B cell (primary cell): ENCODE measurements at regions of chr20 and their contacts with region 1.

Region 1: GRCh38 chr20:33731693-33732165 is at the start of gene ZNF341:
- DNase-seq: no peak
- ATAC-seq: peak; percentile 74
- H3K4me3 ChIP-seq: peak within 1 kb of the TSS; percentile 63 to 84 (median 68)
- H3K4me3 Mint-ChIP-seq: peak within 1 kb of the TSS; percentile 98
- H3K27ac ChIP-seq: peak within 1 kb of the TSS; percentile 61 to 81
- H3K27ac Mint-ChIP-seq: peak within 1 kb of the TSS; percentile 96
- H3K4me1 ChIP-seq: peaks cover 20 to 29% of the 10 kb centered on the region in 2 donors
- H3K4me1 Mint-ChIP-seq: peaks cover 24% of the 10 kb centered on the region
- H3K27me3 ChIP-seq: no peaks in the 10 kb centered on the region
- H3K27me3 Mint-ChIP-seq: no peaks in the 10 kb centered on the region
- CTCF ChIP-seq: peak; percentile 84
- total RNA-seq, gene ZNF341: 9.1 and 9.9 TPM in 2 replicates

Region 2: GRCh38 chr20:33489495-33490022 is 242.2 kb before region 1 on chr20:
- CTCF ChIA-PET with region 1: no interaction called
- POLR2A ChIA-PET with region 1: interaction called, 5 read pairs
- intact Hi-C with region 1: loop called (anchors 2 kb)
- DNase-seq: peak; percentile 99
- ATAC-seq: peak; percentile 97
- H3K4me3 ChIP-seq: peak overlapping the region; percentile 24 to 73 (median 68)
- H3K4me3 Mint-ChIP-seq: peak overlapping the region; percentile 93
- H3K27ac ChIP-seq: peak overlapping the region; percentile 97 to 99
- H3K27ac Mint-ChIP-seq: peak overlapping the region; percentile 95
- H3K4me1 ChIP-seq: peaks cover 9 to 19% of the 10 kb centered on the region in 2 donors
- H3K4me1 Mint-ChIP-seq: peaks cover 16% of the 10 kb centered on the region
- H3K27me3 ChIP-seq: no peaks in the 10 kb centered on the region
- H3K27me3 Mint-ChIP-seq: no peaks in the 10 kb centered on the region
- CTCF ChIP-seq: no peak

Region 3: DNA sequence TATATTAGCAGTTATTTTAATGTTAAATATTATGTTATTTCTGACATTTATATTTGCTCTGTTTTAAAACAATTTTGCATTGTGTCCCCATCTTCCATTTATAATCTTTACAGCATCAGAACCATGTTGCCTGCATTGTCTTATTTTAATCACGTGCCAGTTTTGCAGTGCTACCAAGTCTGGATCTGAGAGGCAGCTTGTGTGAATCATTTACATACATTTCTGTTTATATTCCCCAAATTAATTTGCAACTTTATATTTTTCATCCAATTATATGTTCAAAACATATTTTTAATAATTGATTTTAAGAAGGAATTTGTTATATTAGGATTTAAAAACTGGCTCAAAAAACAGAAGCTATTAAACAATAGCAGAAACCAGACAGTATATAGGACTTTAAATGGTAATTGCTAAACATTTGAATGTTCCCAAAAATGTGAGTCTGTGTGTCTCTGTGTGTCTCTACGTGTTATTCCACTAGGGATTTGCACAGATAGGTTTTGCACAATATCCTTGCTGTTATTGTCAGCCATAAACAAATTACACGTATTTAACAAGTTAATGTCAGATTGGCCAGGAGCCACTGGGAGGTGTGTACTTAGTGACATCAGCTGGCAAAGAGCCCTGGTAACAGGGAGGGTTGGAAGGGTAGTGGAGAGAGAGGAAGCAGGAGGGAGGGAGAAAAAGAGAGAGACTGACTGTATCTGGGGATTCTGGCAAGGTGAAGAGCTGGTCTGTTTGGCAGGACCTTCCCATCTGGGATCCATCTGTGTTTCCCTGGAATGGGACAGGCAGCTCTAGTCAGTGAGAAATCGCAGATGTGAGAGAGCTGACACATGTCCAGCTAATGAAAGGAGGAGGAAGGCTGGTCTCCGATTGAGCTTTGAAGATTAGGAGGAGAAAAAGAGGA is 169.8 kb before region 1 on chr20:
- CTCF ChIA-PET with region 1: no interaction called
- POLR2A ChIA-PET with region 1: no interaction called
- intact Hi-C with region 1: no loop called
- DNase-seq: no peak
- ATAC-seq: no peak
- H3K4me3 ChIP-seq: no peak overlapping the region
- H3K4me3 Mint-ChIP-seq: no peak overlapping the region
- H3K27ac ChIP-seq: no peak overlapping the region
- H3K27ac Mint-ChIP-seq: no peak overlapping the region
- H3K4me1 ChIP-seq: no peaks in the 10 kb centered on the region
- H3K4me1 Mint-ChIP-seq: peaks cover 6% of the 10 kb centered on the region
- H3K27me3 ChIP-seq: no peaks in the 10 kb centered on the region
- H3K27me3 Mint-ChIP-seq: no peaks in the 10 kb centered on the region
- CTCF ChIP-seq: no peak

Region 4: GRCh38 chr20:33686100-33686983 is 45.4 kb before region 1 on chr20 and contains the start of gene E2F1:
- CTCF ChIA-PET with region 1: interaction called, 3 read pairs
- POLR2A ChIA-PET with region 1: interaction called, 3 read pairs
- intact Hi-C with region 1: loop called (anchors 1 kb)
- DNase-seq: peak; percentile 95
- ATAC-seq: peak; percentile 96
- H3K4me3 ChIP-seq: peak within 1 kb of the TSS; percentile 28 to 56 (median 47)
- H3K4me3 Mint-ChIP-seq: peak within 1 kb of the TSS; percentile 92
- H3K27ac ChIP-seq: peak within 1 kb of the TSS; percentile 50 to 65
- H3K27ac Mint-ChIP-seq: peak within 1 kb of the TSS; percentile 89
- H3K4me1 ChIP-seq: peaks cover 16 to 22% of the 10 kb centered on the region in 2 donors
- H3K4me1 Mint-ChIP-seq: peaks cover 27% of the 10 kb centered on the region
- H3K27me3 ChIP-seq: no peaks in the 10 kb centered on the region
- H3K27me3 Mint-ChIP-seq: no peaks in the 10 kb centered on the region
- CTCF ChIP-seq: peak; percentile 33
- total RNA-seq, gene E2F1: 2.4 and 2.7 TPM in 2 replicates

Region 5: DNA sequence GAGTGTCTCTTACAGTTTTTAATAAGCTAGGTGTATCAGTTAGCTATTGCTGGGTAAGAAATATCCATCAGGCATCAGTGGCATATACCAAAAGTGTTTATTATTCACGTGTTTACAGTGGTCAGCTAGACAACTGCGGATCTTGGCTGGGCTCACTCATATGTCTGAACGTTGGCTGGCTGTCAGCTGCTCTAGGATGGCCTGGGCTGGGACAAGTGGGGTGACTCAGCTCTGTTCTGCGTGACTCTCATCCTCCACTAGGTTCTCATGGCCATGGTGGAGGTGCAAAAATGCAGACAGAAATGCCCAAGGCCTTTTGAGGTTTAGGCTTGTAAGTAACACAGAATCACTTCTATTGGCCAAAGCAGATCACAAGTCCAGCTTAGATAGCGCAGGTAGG is 22.0 kb after region 1 on chr20:
- CTCF ChIA-PET with region 1: interaction called, 16 read pairs
- POLR2A ChIA-PET with region 1: interaction called, 3 read pairs
- intact Hi-C with region 1: loop called (anchors 1 kb)
- DNase-seq: no peak
- ATAC-seq: no peak
- H3K4me3 ChIP-seq: no peak overlapping the region
- H3K4me3 Mint-ChIP-seq: no peak overlapping the region
- H3K27ac ChIP-seq: no peak overlapping the region
- H3K27ac Mint-ChIP-seq: no peak overlapping the region
- H3K4me1 ChIP-seq: peaks cover 10 to 15% of the 10 kb centered on the region in 2 donors
- H3K4me1 Mint-ChIP-seq: peaks cover 16% of the 10 kb centered on the region
- H3K27me3 ChIP-seq: no peaks in the 10 kb centered on the region
- H3K27me3 Mint-ChIP-seq: no peaks in the 10 kb centered on the region
- CTCF ChIP-seq: no peak

Region 6: DNA sequence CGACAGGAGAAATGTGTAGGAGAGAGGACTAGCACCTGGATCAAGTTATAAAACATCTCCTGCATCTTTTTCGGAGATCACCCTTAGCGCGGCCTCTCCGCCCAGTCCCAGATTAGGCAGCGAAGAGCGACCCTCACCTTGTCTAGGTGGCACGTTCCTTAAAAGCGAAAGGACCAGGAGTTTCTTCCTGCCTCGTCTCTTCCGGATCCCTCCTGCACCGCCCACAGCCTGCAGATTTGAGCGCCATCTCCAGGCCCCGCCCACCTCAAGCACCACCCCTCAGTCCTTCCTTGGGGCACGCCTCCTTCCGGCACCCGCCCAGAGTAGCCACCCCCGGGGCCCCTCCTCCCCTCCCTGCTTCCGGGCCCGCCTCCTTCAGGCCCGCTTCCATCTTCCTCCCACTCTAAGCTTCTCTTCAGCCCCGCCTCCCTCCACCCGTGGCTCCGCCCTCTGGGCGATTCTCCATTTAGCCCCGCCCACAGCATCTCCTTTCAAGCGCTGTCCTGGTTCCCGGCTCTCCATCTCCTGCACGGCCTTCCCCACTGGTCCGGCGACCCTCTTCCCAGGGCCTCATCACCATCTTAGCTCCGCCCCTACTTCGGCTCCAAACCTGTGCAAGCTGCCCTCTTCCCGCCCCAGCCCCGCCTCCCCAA is 261.3 kb after region 1 on chr20:
- CTCF ChIA-PET with region 1: no interaction called
- POLR2A ChIA-PET with region 1: interaction called, 18 read pairs
- intact Hi-C with region 1: loop called (anchors 1 kb)
- DNase-seq: peak; percentile 99
- ATAC-seq: peak; percentile 84
- H3K4me3 ChIP-seq: peak overlapping the region; percentile 94 to 99 (median 98)
- H3K4me3 Mint-ChIP-seq: peak overlapping the region; percentile 92
- H3K27ac ChIP-seq: peak overlapping the region; percentile 90 to 91
- H3K27ac Mint-ChIP-seq: peak overlapping the region; percentile 99
- H3K4me1 ChIP-seq: peaks cover 40 to 48% of the 10 kb centered on the region in 2 donors
- H3K4me1 Mint-ChIP-seq: peaks cover 59% of the 10 kb centered on the region
- H3K27me3 ChIP-seq: no peaks in the 10 kb centered on the region
- H3K27me3 Mint-ChIP-seq: no peaks in the 10 kb centered on the region
- CTCF ChIP-seq: no peak

Region 7: GRCh38 chr20:34062570-34063482 is 331.1 kb after region 1 on chr20:
- CTCF ChIA-PET with region 1: no interaction called
- POLR2A ChIA-PET with region 1: no interaction called
- intact Hi-C with region 1: no loop called
- DNase-seq: no peak
- ATAC-seq: no peak
- H3K4me3 ChIP-seq: no peak overlapping the region
- H3K4me3 Mint-ChIP-seq: no peak overlapping the region
- H3K27ac ChIP-seq: no peak overlapping the region
- H3K27ac Mint-ChIP-seq: no peak overlapping the region
- H3K4me1 ChIP-seq: peaks cover 16% of the 10 kb centered on the region in 2 donors
- H3K4me1 Mint-ChIP-seq: peaks cover 36% of the 10 kb centered on the region
- H3K27me3 ChIP-seq: no peaks in the 10 kb centered on the region
- H3K27me3 Mint-ChIP-seq: no peaks in the 10 kb centered on the region
- CTCF ChIP-seq: no peak